Endothelial cell of umbilical vein (primary cell): ENCODE measurements at regions of chr16 and their contacts with region 1.

Region 1: GRCh38 chr16:67017810-67018488 is 11.0 kb upstream of the CBFB start:
- DNase-seq: peak; percentile 89
- H3K4me3 ChIP-seq: no peak overlapping the region
- H3K27ac ChIP-seq: no peak overlapping the region
- H3K4me1 ChIP-seq: peaks cover 9% of the 10 kb centered on the region
- H3K27me3 ChIP-seq: no peaks in the 10 kb centered on the region
- CTCF ChIP-seq: peak; percentile 76 to 81
- POLR2A ChIP-seq: no peak

Region 2: DNA sequence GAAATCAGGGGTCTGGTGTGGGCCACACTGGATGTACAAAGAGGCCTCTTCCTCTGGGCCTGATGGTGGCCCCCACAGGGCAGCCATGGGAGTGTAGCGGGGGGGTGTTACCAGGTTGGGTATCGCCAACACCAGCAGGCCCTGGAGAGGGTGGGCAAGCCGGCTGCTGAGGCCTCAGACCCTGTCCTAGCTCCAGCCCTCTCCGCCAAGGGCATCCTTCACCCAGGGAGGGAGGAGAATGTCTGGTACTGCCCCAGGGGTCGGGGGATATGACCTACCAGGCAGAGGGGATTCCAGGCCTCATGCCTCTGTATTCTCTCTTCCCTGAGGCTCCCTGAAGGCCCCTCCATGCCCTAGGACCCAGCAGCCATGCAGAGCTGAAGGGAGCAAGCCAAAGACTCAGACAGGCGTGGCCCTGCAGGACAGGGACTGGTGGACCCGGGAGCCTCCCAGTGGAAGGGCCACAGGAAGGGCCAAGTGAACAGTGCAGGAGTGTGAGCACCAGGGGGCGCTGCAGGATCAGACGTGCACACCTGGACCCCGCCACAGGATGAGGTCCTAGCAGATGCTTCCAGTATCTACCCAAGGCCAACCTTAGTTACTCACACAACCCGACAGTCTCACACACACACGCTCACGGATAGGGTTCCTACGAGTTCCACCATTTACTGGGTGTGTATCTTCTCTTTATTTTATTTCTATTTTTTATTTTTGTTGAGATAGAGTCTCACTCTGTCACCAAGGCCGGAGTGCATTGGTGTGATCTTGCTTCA is 40.4 kb before region 1 on chr16:
- CTCF ChIA-PET with region 1: interaction called, 4 read pairs
- POLR2A ChIA-PET with region 1: no interaction called
- dilution Hi-C with region 1: no loop called
- intact Hi-C with region 1: loop called (anchors 5 kb)
- DNase-seq: peak; percentile 60
- H3K4me3 ChIP-seq: no peak overlapping the region
- H3K27ac ChIP-seq: no peak overlapping the region
- H3K4me1 ChIP-seq: no peaks in the 10 kb centered on the region
- H3K27me3 ChIP-seq: no peaks in the 10 kb centered on the region
- CTCF ChIP-seq: peak; percentile 86 to 89
- POLR2A ChIP-seq: no peak

Region 3: GRCh38 chr16:67006930-67007658 is 10.9 kb before region 1 on chr16:
- CTCF ChIA-PET with region 1: interaction called, 12 read pairs
- POLR2A ChIA-PET with region 1: no interaction called
- dilution Hi-C with region 1: no loop called
- intact Hi-C with region 1: no loop called
- DNase-seq: no peak
- H3K4me3 ChIP-seq: no peak overlapping the region
- H3K27ac ChIP-seq: no peak overlapping the region
- H3K4me1 ChIP-seq: no peaks in the 10 kb centered on the region
- H3K27me3 ChIP-seq: no peaks in the 10 kb centered on the region
- CTCF ChIP-seq: no peak
- POLR2A ChIP-seq: no peak

Region 4: GRCh38 chr16:67104061-67104460 is 86.1 kb after region 1 on chr16:
- CTCF ChIA-PET with region 1: interaction called, 86 read pairs
- POLR2A ChIA-PET with region 1: no interaction called
- dilution Hi-C with region 1: no loop called
- intact Hi-C with region 1: loop called (anchors 1 kb)
- DNase-seq: peak; percentile 46
- H3K4me3 ChIP-seq: no peak overlapping the region
- H3K27ac ChIP-seq: no peak overlapping the region
- H3K4me1 ChIP-seq: peaks cover 2% of the 10 kb centered on the region
- H3K27me3 ChIP-seq: no peaks in the 10 kb centered on the region
- CTCF ChIP-seq: peak; percentile 47 to 64
- POLR2A ChIP-seq: no peak

Region 5: GRCh38 chr16:67115639-67116038 is 97.7 kb after region 1 on chr16:
- CTCF ChIA-PET with region 1: interaction called, 12 read pairs
- POLR2A ChIA-PET with region 1: no interaction called
- dilution Hi-C with region 1: no loop called
- intact Hi-C with region 1: no loop called
- DNase-seq: no peak
- H3K4me3 ChIP-seq: no peak overlapping the region
- H3K27ac ChIP-seq: no peak overlapping the region
- H3K4me1 ChIP-seq: peaks cover 1% of the 10 kb centered on the region
- H3K27me3 ChIP-seq: no peaks in the 10 kb centered on the region
- CTCF ChIP-seq: no peak
- POLR2A ChIP-seq: no peak

Region 6: GRCh38 chr16:67183627-67184328 is 165.8 kb after region 1 on chr16 and contains the start of gene MATCAP1:
- CTCF ChIA-PET with region 1: interaction called, 40 read pairs
- POLR2A ChIA-PET with region 1: no interaction called
- dilution Hi-C with region 1: no loop called
- intact Hi-C with region 1: loop called (anchors 1 kb)
- DNase-seq: peak; percentile 98
- H3K4me3 ChIP-seq: peak within 1 kb of the TSS; percentile 75 to 90 (median 88)
- H3K27ac ChIP-seq: peak within 1 kb of the TSS; percentile 95
- H3K4me1 ChIP-seq: peaks cover 33% of the 10 kb centered on the region
- H3K27me3 ChIP-seq: no peaks in the 10 kb centered on the region
- CTCF ChIP-seq: no peak
- POLR2A ChIP-seq: peak; percentile 70
- total RNA-seq, gene MATCAP1: 45.8 and 53.3 TPM in 2 replicates